PC-3 (cell line): ENCODE measurements at regions of chr15 and their contacts with region 1.

Region 1: DNA sequence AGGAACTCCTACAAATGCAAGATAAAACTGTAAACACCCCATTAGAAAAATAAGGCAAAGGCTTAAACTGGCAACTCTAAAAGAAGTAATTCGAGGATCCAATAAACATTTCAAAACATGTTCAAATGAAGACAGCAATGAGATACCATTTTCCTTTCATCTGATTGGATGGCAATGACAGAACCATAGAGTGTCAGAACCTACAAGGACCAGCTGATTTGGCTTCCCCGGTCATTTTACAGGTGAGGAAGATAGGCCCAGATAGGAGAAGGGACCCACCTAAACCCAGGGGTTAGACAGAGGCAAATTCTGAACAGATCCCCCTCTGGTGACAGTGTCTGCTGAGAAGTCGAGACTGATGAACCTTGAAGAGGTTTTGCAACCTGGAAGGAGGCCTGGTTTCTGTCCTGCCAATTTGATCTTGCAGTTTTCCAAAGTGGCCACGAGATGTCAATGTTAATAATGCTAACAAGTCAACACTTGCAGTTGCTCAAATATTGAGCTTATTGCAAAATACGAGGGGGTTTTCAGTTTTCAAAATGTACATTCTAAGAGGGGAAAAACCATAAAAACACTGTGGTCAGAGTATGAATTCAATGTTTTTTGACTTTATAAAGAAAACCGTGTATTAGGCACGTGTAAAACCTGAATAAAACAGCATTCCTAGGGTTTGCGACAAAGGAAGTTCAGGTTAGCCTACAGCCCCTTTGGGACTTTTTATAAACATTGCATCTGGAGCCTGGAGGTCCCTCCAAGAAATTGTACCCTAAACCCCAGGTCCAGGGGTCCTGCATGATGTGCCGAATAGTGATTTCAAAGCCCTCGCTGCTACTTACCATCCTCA is 21.5 kb downstream of the CFAP161 start:
- DNase-seq: peak; percentile 62
- ATAC-seq: peak; percentile 49
- H3K4me3 ChIP-seq: no peak overlapping the region
- H3K27ac ChIP-seq: no peak overlapping the region
- H3K4me1 ChIP-seq: no peaks in the 10 kb centered on the region
- H3K27me3 ChIP-seq: no peaks in the 10 kb centered on the region
- CTCF ChIP-seq: peak; percentile 76

Region 2: DNA sequence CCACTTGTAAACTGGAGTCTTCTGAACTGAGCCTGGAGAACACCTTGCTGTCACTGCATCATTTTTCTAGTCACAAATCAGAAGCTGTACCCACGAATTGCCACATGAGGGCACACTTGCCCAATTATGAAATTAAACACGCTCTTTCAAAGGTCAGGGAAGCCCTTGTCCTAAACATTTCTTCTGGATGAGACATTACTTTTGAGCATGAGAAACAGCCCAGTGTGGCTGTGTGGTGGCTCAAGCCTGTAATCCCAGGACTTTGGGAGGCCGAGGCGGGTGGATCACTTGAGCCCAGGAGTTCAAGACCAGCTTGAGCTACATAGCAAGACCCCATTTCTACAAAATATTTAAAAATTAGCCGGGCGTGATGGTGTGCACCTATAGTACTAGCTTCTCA is 49.0 kb before region 1 on chr15:
- CTCF ChIA-PET with region 1: interaction called, 3 read pairs
- POLR2A ChIA-PET with region 1: no interaction called
- intact Hi-C with region 1: loop called (anchors 5 kb)
- DNase-seq: peak; percentile 78
- ATAC-seq: peak; percentile 71
- H3K4me3 ChIP-seq: no peak overlapping the region
- H3K27ac ChIP-seq: no peak overlapping the region
- H3K4me1 ChIP-seq: peaks cover 7% of the 10 kb centered on the region; the same call in 1 of the 2 replicates
- H3K27me3 ChIP-seq: peaks cover 11% of the 10 kb centered on the region
- CTCF ChIP-seq: peak; percentile 78